CD4-positive, alpha-beta T cell (primary cell): ENCODE measurements at regions of chr12 and their contacts with region 1.

Region 1: GRCh38 chr12:52681526-52682380 is 1.5 kb upstream of the KRT1 start:
- DNase-seq: peak; percentile 21 to 74 (median 48)
- ATAC-seq: peak; percentile 98
- H3K4me3 ChIP-seq: no peak overlapping the region
- H3K4me3 Mint-ChIP-seq: peak overlapping the region; percentile 52
- H3K27ac ChIP-seq: no peak overlapping the region
- H3K27ac Mint-ChIP-seq: peak overlapping the region; percentile 86
- H3K4me1 ChIP-seq: peaks cover 24% of the 10 kb centered on the region
- H3K4me1 Mint-ChIP-seq: peaks cover 64% of the 10 kb centered on the region
- H3K27me3 ChIP-seq: no peaks in the 10 kb centered on the region
- H3K27me3 Mint-ChIP-seq: no peaks in the 10 kb centered on the region
- CTCF ChIP-seq: no peak

Region 2: GRCh38 chr12:52708010-52708409 is 26.3 kb after region 1 on chr12:
- CTCF ChIA-PET with region 1: no interaction called
- POLR2A ChIA-PET with region 1: interaction called, 3 read pairs
- intact Hi-C with region 1: loop called in 1 of 2 experiments (anchors 1 kb)
- DNase-seq: peak in 4 of 14 experiments; percentile 12 to 42 (median 27)
- ATAC-seq: peak; percentile 94
- H3K4me3 ChIP-seq: no peak overlapping the region
- H3K4me3 Mint-ChIP-seq: peak overlapping the region; percentile 12
- H3K27ac ChIP-seq: no peak overlapping the region
- H3K27ac Mint-ChIP-seq: peak overlapping the region; percentile 78
- H3K4me1 ChIP-seq: peaks cover 14% of the 10 kb centered on the region
- H3K4me1 Mint-ChIP-seq: peaks cover 45% of the 10 kb centered on the region
- H3K27me3 ChIP-seq: peaks cover 0 to 5% of the 10 kb centered on the region in 2 experiments
- H3K27me3 Mint-ChIP-seq: peaks cover 10% of the 10 kb centered on the region
- CTCF ChIP-seq: no peak